ENCODE measurements at regions of chr11 and their contacts with region 1.

Region 1: GRCh38 chr11:75388386-75389275 is 10.7 kb upstream of the RPS3 start:
- DNase-seq: peak; percentile 83
- ATAC-seq: peak; percentile 91
- H3K4me3 Mint-ChIP-seq: no peak overlapping the region
- H3K27ac Mint-ChIP-seq: no peak overlapping the region
- H3K4me1 Mint-ChIP-seq: peaks cover 12% of the 10 kb centered on the region
- H3K27me3 Mint-ChIP-seq: no peaks in the 10 kb centered on the region
- CTCF ChIP-seq: peak; percentile 79

Region 2: GRCh38 chr11:75328426-75329277 is 60.0 kb before region 1 on chr11:
- CTCF ChIA-PET with region 1: interaction called, 13 read pairs
- POLR2A ChIA-PET with region 1: no interaction called
- intact Hi-C with region 1: loop called (anchors 1 kb)
- DNase-seq: peak; percentile 81
- ATAC-seq: peak; percentile 67
- H3K4me3 Mint-ChIP-seq: no peak overlapping the region
- H3K27ac Mint-ChIP-seq: peak overlapping the region; percentile 18
- H3K4me1 Mint-ChIP-seq: peaks cover 65% of the 10 kb centered on the region
- H3K27me3 Mint-ChIP-seq: no peaks in the 10 kb centered on the region
- CTCF ChIP-seq: no peak

Region 3: GRCh38 chr11:75351791-75352587 is 36.6 kb before region 1 on chr11:
- CTCF ChIA-PET with region 1: interaction called, 16 read pairs
- POLR2A ChIA-PET with region 1: no interaction called
- intact Hi-C with region 1: no loop called
- DNase-seq: peak; percentile 64
- ATAC-seq: peak; percentile 55
- H3K4me3 Mint-ChIP-seq: peak overlapping the region; percentile 79
- H3K27ac Mint-ChIP-seq: peak overlapping the region; percentile 86
- H3K4me1 Mint-ChIP-seq: peaks cover 49% of the 10 kb centered on the region
- H3K27me3 Mint-ChIP-seq: no peaks in the 10 kb centered on the region
- CTCF ChIP-seq: no peak

Region 4: DNA sequence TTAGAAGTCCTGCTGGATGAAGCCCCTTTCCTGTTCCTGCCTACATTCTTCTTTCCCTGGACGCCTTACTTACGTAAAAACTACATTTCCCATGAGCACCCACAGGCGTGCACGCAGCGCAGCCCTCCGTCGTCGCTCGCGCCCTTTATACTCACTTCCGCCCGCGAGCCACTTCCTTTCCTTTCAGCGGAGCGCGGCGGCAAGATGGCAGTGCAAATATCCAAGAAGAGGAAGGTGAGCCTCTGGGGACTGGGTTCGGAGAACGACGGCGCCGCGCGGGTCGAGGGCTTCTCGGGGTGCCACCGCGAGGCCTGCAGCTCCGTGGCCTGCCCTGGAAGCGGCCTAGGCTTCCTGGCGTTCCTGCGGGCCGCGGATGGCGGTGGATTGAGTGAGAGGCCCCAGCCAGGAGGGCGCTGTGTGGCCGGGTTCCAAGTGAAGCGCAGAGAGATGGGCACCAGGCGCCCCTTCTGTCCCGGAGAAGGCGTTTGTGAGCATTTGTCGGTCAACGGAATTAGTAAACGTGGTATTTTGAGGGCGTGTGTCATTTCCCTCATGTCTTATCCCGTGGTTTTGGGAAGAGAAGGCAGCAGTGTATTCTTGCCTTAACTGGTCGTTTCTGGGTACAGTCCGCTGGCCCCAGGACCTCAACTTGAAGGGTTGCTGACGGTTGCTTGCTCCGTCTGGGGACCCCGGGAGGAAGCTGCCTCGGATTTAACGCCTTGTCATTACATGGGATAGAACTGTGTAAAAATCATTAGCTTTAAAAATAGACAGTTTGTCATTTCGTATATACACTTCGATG is 10.9 kb after region 1 on chr11 and contains the start of gene RPS3:
- CTCF ChIA-PET with region 1: interaction called, 24 read pairs
- POLR2A ChIA-PET with region 1: interaction called, 26 read pairs
- intact Hi-C with region 1: no loop called
- DNase-seq: peak; percentile 93
- ATAC-seq: peak; percentile 91
- H3K4me3 Mint-ChIP-seq: peak within 1 kb of the TSS; percentile 100
- H3K27ac Mint-ChIP-seq: peak within 1 kb of the TSS; percentile 99
- H3K4me1 Mint-ChIP-seq: peaks cover 43% of the 10 kb centered on the region
- H3K27me3 Mint-ChIP-seq: no peaks in the 10 kb centered on the region
- CTCF ChIP-seq: no peak
- total RNA-seq, gene RPS3: 4,906 to 4,954 TPM

Region 5: GRCh38 chr11:75445315-75445953 is 56.8 kb after region 1 on chr11:
- CTCF ChIA-PET with region 1: interaction called, 13 read pairs
- POLR2A ChIA-PET with region 1: no interaction called
- intact Hi-C with region 1: no loop called
- DNase-seq: peak; percentile 85
- ATAC-seq: peak; percentile 95
- H3K4me3 Mint-ChIP-seq: no peak overlapping the region
- H3K27ac Mint-ChIP-seq: no peak overlapping the region
- H3K4me1 Mint-ChIP-seq: no peaks in the 10 kb centered on the region
- H3K27me3 Mint-ChIP-seq: no peaks in the 10 kb centered on the region
- CTCF ChIP-seq: peak; percentile 95

Region 6: DNA sequence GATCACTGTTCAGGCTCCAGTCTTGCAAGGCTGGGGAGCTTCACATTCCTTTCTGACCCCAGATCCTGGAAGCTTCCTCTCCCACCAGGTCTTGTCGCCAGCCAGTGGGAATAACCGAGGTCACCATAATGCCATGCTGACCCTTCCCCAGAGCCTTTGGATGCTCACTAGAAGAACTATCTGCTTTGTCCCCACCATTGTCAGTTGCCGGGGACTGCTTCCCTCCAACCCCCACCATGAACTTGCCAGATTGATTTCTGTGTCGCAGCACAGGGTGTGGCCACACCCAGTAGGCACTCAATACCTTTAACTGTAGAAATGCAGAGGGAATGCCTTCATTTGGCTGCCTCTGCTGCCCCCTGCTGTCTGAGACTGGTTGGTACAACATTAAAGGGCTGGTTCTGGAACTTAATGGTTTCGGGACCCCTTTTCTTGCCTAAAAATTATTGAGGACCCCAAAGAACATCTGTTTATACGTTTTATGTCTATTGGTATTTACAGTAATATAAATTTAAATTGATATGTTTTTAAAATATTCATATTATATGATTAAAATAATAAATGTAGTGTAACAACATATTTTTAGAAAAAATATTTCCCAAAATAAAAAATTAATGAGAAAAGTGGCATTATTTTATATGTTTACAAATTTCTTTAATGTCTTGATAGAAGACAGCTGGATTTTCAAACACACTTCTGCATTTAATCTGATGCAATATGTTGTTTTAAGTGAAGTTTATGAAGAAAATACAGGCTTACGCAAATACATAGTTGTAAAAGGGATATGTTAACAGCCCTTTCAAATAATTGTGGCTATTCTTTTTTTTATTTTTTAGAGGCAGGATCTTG is 143.8 kb after region 1 on chr11:
- CTCF ChIA-PET with region 1: interaction called, 66 read pairs
- POLR2A ChIA-PET with region 1: interaction called, 4 read pairs
- intact Hi-C with region 1: loop called (anchors 5 kb)
- DNase-seq: peak; percentile 89
- ATAC-seq: peak; percentile 81
- H3K4me3 Mint-ChIP-seq: no peak overlapping the region
- H3K27ac Mint-ChIP-seq: no peak overlapping the region
- H3K4me1 Mint-ChIP-seq: peaks cover 31% of the 10 kb centered on the region
- H3K27me3 Mint-ChIP-seq: no peaks in the 10 kb centered on the region
- CTCF ChIP-seq: peak; percentile 95